ENCODE measurements at regions of chr1 and their contacts with region 1.

Region 1: DNA sequence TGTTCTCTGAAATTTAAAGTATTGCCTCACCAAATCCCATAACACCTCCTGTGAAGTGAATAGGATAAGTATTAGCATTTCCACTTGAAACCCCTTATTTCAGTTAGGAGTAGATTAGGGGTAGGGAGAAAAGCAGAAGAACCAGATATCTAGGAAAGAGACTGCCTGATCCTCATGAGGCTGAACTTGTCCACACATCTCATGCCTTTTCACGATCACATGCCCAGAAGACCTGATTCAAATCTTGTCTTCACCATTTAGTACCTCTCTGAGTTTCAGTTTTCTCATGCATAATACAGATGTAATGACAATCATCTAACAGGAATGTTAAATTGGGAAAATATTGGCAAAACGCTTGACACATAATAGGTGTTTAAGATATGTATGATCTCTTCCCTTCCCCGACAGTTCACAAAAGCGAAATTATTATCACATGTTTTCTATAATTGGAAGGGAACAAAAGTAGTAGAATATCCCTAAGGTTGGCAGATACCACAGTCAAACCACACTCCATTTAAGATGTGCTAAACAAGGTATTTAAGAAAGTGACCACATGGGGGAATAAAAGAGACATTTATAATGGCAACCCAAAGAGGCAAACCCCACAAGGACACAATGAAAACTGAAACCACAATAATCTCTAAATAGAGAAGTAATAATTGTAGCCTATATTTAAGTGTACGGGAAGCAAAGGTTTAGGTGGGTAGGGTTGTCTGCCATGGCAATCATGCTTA is 25.2 kb downstream of the GFI1 start:
- DNase-seq: no peak
- H3K4me3 Mint-ChIP-seq: no peak overlapping the region
- H3K27ac Mint-ChIP-seq: peak overlapping the region; percentile 47
- H3K4me1 Mint-ChIP-seq: peaks cover 56% of the 10 kb centered on the region
- H3K27me3 Mint-ChIP-seq: no peaks in the 10 kb centered on the region

Region 2: DNA sequence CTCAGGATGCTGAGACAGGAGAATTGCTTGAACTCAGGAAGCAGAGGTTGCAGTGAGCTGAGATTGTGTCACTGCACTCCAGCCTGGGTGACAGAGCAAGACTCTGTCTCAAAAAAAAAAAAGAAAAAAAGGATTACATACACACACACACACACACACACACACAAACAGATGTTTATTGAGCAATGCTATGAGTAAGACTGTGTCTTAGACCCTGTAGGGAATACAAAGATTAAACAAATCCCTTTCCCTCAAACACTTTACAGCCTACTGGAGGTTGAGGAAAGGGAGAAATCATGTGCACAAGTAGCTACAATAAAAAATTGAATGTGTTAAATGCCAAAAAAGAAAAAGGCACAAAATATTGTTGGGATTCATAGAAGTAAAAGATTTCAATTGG is 104.6 kb before region 1 on chr1:
- intact Hi-C with region 1: no loop called
- DNase-seq: no peak
- H3K4me3 Mint-ChIP-seq: no peak overlapping the region
- H3K27ac Mint-ChIP-seq: peak overlapping the region; percentile 5
- H3K4me1 Mint-ChIP-seq: peaks cover 26% of the 10 kb centered on the region
- H3K27me3 Mint-ChIP-seq: no peaks in the 10 kb centered on the region

Region 3: GRCh38 chr1:92411511-92411910 is 50.0 kb before region 1 on chr1:
- intact Hi-C with region 1: loop called (anchors 5 kb)
- DNase-seq: no peak
- H3K4me3 Mint-ChIP-seq: no peak overlapping the region
- H3K27ac Mint-ChIP-seq: peak overlapping the region; percentile 46
- H3K4me1 Mint-ChIP-seq: peaks cover 40% of the 10 kb centered on the region
- H3K27me3 Mint-ChIP-seq: no peaks in the 10 kb centered on the region

Region 4: GRCh38 chr1:92951141-92951582 is 489.6 kb after region 1 on chr1:
- intact Hi-C with region 1: no loop called
- DNase-seq: no peak
- H3K4me3 Mint-ChIP-seq: no peak overlapping the region
- H3K27ac Mint-ChIP-seq: no peak overlapping the region
- H3K4me1 Mint-ChIP-seq: peaks cover 47% of the 10 kb centered on the region
- H3K27me3 Mint-ChIP-seq: no peaks in the 10 kb centered on the region

Measured in activated T-helper 2 cell treated with anti-CD3 and anti-CD28 coated beads, Interferon-gamma antibody, Interleukin-2, Interleukin-4, amounts not matched to agents 10 μg/mL and 5 μg/mL and 100 μg/mL, durations not matched to agents 14 hours and 24 hours and 36 hours (primary cell).